ENCODE measurements at regions of chr10 and their contacts with region 1.

Region 1: GRCh38 chr10:124688889-124689670 is 55.1 kb downstream of the FAM53B start:
- DNase-seq: peak; percentile 67
- ATAC-seq: peak; percentile 92
- H3K4me3 Mint-ChIP-seq: peak overlapping the region; percentile 10
- H3K27ac Mint-ChIP-seq: peak overlapping the region; percentile 76
- H3K4me1 Mint-ChIP-seq: peaks cover 64% of the 10 kb centered on the region
- H3K27me3 Mint-ChIP-seq: no peaks in the 10 kb centered on the region

Region 2: DNA sequence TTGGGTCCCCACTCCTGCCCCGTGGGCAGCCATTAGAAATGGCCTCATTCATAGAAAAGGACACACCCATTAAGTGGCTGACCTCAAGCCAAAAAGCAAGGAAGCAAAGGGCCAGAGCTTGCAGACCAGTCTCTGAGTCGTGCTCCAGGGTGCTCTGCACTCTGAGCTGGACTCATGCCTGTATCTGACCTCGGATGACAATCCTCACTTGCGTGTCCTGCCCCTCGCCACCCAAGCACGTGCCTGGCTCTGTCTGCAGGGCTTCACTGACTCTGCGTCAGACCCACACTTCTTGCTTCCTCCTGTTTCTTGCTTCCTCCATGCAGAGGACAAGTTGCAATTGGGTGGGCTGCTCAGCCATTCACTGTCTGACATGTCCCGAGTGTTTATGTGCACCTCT is 409.2 kb before region 1 on chr10:
- CTCF ChIA-PET with region 1: no interaction called
- POLR2A ChIA-PET with region 1: no interaction called
- DNase-seq: no peak
- ATAC-seq: no peak
- H3K4me3 Mint-ChIP-seq: no peak overlapping the region
- H3K27ac Mint-ChIP-seq: no peak overlapping the region
- H3K4me1 Mint-ChIP-seq: no peaks in the 10 kb centered on the region
- H3K27me3 Mint-ChIP-seq: peaks cover 6% of the 10 kb centered on the region

Region 3: DNA sequence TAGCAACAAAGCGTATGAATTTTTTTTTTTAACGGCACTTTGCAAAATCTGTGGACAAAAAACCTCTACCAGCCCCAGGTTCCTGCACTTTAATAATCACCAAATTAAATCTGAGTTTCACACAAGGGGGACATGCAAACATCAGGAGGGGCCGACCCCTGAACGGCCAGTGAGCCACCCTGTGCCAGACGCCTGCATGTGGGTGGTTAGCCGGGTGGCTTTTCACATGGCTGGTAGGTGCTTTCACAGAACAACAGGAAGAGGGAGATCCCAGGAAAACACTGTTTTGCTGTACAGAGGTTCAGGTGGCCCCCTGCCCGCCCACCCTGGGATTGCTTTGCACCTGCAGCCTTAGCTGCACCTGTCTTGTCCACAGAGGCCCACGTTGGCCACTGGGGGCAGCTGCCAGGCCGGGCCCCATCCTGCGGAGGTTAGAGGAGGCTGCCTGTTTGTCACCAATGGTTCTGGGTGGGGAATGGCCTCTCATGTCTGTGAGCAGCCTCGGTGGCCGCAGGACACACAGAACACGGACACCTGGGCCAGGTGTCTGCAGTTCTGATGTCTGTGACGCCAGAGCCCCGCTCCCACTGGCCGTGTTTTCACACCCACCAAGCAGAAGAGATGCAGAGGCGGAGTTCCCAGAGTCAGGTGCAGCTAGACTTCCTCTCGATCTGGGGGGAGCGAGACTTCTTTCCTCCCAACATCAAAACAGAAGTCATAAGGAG is 52.6 kb before region 1 on chr10:
- CTCF ChIA-PET with region 1: no interaction called
- POLR2A ChIA-PET with region 1: no interaction called
- DNase-seq: no peak
- ATAC-seq: peak; percentile 54
- H3K4me3 Mint-ChIP-seq: no peak overlapping the region
- H3K27ac Mint-ChIP-seq: peak overlapping the region; percentile 55
- H3K4me1 Mint-ChIP-seq: peaks cover 49% of the 10 kb centered on the region
- H3K27me3 Mint-ChIP-seq: no peaks in the 10 kb centered on the region

Region 4: DNA sequence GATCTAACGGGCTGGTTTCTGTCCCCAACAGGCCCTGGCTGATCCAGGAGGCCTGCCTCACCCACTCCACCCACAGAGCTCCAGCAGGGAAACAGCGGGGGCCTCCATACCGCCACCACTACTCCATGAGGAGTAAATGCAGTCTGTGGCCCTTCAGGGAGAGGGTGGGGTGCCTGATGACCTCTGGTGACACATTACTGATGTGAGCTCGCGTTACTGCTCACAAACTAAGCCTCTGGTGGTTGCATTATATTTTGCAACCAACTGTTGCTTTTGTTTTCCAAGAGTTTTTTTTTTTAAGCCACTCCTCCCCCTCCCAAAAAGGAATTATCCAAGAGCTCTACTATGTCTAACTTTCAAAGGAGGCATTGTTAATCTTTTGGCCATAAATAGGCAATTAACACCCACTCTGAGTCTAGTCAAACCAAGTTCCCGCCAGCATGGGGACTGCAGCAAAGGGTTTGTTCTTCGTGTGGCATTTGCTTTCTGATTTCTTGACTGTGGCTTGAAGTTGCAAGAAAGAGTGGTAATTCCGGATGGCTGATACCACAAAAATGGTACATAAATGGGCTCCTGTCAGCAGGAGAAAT is 17.5 kb before region 1 on chr10:
- CTCF ChIA-PET with region 1: interaction called, 31 read pairs
- POLR2A ChIA-PET with region 1: interaction called, 6 read pairs
- DNase-seq: no peak
- ATAC-seq: no peak
- H3K4me3 Mint-ChIP-seq: no peak overlapping the region
- H3K27ac Mint-ChIP-seq: peak overlapping the region; percentile 65
- H3K4me1 Mint-ChIP-seq: peaks cover 42% of the 10 kb centered on the region
- H3K27me3 Mint-ChIP-seq: no peaks in the 10 kb centered on the region

Region 5: GRCh38 chr10:124677749-124678556 is 11.1 kb before region 1 on chr10:
- CTCF ChIA-PET with region 1: interaction called, 31 read pairs
- POLR2A ChIA-PET with region 1: interaction called, 6 read pairs
- DNase-seq: no peak
- ATAC-seq: peak; percentile 50
- H3K4me3 Mint-ChIP-seq: peak overlapping the region; percentile 56
- H3K27ac Mint-ChIP-seq: peak overlapping the region; percentile 84
- H3K4me1 Mint-ChIP-seq: peaks cover 55% of the 10 kb centered on the region
- H3K27me3 Mint-ChIP-seq: no peaks in the 10 kb centered on the region

Region 6: GRCh38 chr10:124703778-124704427 is 14.8 kb after region 1 on chr10:
- CTCF ChIA-PET with region 1: interaction called, 27 read pairs
- POLR2A ChIA-PET with region 1: interaction called, 5 read pairs
- DNase-seq: no peak
- ATAC-seq: no peak
- H3K4me3 Mint-ChIP-seq: no peak overlapping the region
- H3K27ac Mint-ChIP-seq: peak overlapping the region; percentile 86
- H3K4me1 Mint-ChIP-seq: peaks cover 88% of the 10 kb centered on the region
- H3K27me3 Mint-ChIP-seq: no peaks in the 10 kb centered on the region

Region 7: GRCh38 chr10:124911124-124912067 is 222.3 kb after region 1 on chr10:
- CTCF ChIA-PET with region 1: no interaction called
- POLR2A ChIA-PET with region 1: no interaction called
- DNase-seq: no peak
- ATAC-seq: no peak
- H3K4me3 Mint-ChIP-seq: no peak overlapping the region
- H3K27ac Mint-ChIP-seq: no peak overlapping the region
- H3K4me1 Mint-ChIP-seq: peaks cover 16% of the 10 kb centered on the region
- H3K27me3 Mint-ChIP-seq: peaks cover 16% of the 10 kb centered on the region

Measured in activated CD8-positive, alpha-beta T cell treated with anti-CD3 and anti-CD28 coated beads, Interleukin-2, amount 10 ng/mL, durations not matched to agents 7 days and 5 days (primary cell).